PC-3 (cell line): ENCODE measurements at regions of chr2 and their contacts with region 1.

Region 1: GRCh38 chr2:230824406-230824978 is 40.2 kb upstream of the ITM2C start:
- DNase-seq: peak; percentile 82
- ATAC-seq: peak; percentile 80
- H3K4me3 ChIP-seq: peak overlapping the region; percentile 58
- H3K27ac ChIP-seq: no peak overlapping the region
- H3K4me1 ChIP-seq: no peaks in the 10 kb centered on the region
- H3K27me3 ChIP-seq: no peaks in the 10 kb centered on the region
- CTCF ChIP-seq: peak; percentile 83

Region 2: DNA sequence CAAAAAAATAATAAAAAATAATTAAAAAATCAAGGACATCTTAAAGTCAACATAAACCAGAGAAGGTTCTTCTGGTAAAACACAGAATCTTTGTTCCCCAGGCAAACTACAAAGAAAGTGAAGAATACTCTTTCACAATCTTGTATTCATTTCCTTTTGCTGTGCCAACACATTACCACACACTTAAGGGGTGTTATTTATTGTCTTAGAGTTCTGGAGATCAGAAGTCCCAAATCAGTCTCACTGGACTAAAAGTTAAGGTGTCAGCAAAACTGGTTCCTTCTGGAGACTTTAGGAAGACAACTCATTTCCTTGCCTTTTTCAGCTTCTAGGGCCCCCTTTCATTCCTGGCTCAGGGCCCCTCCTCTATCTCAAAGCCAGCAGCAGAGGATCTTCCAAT is 124.0 kb before region 1 on chr2:
- CTCF ChIA-PET with region 1: no interaction called
- POLR2A ChIA-PET with region 1: no interaction called
- intact Hi-C with region 1: no loop called
- DNase-seq: no peak
- ATAC-seq: no peak
- H3K4me3 ChIP-seq: no peak overlapping the region
- H3K27ac ChIP-seq: no peak overlapping the region
- H3K4me1 ChIP-seq: peaks cover 9% of the 10 kb centered on the region; the same call in 1 of the 2 replicates
- H3K27me3 ChIP-seq: no peaks in the 10 kb centered on the region
- CTCF ChIP-seq: no peak

Region 3: DNA sequence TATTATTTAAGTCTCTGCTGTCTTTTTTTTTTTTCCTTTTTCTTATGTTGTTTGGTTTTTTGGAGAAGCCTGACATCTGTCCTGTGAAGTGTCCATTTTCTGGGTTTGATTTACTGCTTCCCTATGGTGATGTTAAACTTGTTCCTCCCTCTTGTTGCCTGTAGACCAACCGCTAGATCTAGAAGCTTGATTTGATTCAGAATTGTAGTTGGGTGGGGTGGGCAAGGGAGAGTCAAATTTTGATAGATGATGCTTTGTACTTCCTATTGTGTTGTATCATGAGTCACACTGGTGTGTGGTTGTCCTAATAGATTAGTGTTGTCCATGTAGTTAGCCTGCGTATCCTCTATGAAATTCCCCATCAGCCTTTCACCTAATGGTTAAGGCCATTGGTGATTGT is 76.4 kb before region 1 on chr2:
- CTCF ChIA-PET with region 1: no interaction called
- POLR2A ChIA-PET with region 1: no interaction called
- intact Hi-C with region 1: no loop called
- DNase-seq: peak; percentile 55
- ATAC-seq: peak; percentile 32
- H3K4me3 ChIP-seq: no peak overlapping the region
- H3K27ac ChIP-seq: peak overlapping the region; percentile 31
- H3K4me1 ChIP-seq: peaks cover 31% of the 10 kb centered on the region
- H3K27me3 ChIP-seq: no peaks in the 10 kb centered on the region
- CTCF ChIP-seq: no peak

Region 4: GRCh38 chr2:230762317-230762896 is 62.1 kb before region 1 on chr2:
- CTCF ChIA-PET with region 1: no interaction called
- POLR2A ChIA-PET with region 1: no interaction called
- intact Hi-C with region 1: no loop called
- DNase-seq: peak; percentile 62
- ATAC-seq: peak; percentile 91
- H3K4me3 ChIP-seq: no peak overlapping the region
- H3K27ac ChIP-seq: no peak overlapping the region
- H3K4me1 ChIP-seq: peaks cover 18% of the 10 kb centered on the region
- H3K27me3 ChIP-seq: no peaks in the 10 kb centered on the region
- CTCF ChIP-seq: peak; percentile 79

Region 5: GRCh38 chr2:230902180-230902899 is 77.8 kb after region 1 on chr2:
- CTCF ChIA-PET with region 1: interaction called, 5 read pairs
- POLR2A ChIA-PET with region 1: no interaction called
- intact Hi-C with region 1: loop called (anchors 5 kb)
- DNase-seq: peak; percentile 72
- ATAC-seq: peak; percentile 85
- H3K4me3 ChIP-seq: no peak overlapping the region
- H3K27ac ChIP-seq: no peak overlapping the region
- H3K4me1 ChIP-seq: peaks cover 4% of the 10 kb centered on the region; the same call in 1 of the 2 replicates
- H3K27me3 ChIP-seq: no peaks in the 10 kb centered on the region
- CTCF ChIP-seq: peak; percentile 86

Region 6: GRCh38 chr2:230987137-230988020 is 162.9 kb after region 1 on chr2:
- CTCF ChIA-PET with region 1: interaction called, 19 read pairs
- POLR2A ChIA-PET with region 1: interaction called, 4 read pairs
- intact Hi-C with region 1: loop called (anchors 1 kb)
- DNase-seq: peak; percentile 78
- ATAC-seq: peak; percentile 98
- H3K4me3 ChIP-seq: peak overlapping the region; percentile 72
- H3K27ac ChIP-seq: no peak overlapping the region
- H3K4me1 ChIP-seq: peaks cover 5% of the 10 kb centered on the region
- H3K27me3 ChIP-seq: no peaks in the 10 kb centered on the region
- CTCF ChIP-seq: peak; percentile 92

Region 7: GRCh38 chr2:231056453-231057424 is 232.2 kb after region 1 on chr2 and contains the start of gene PSMD1:
- CTCF ChIA-PET with region 1: interaction called, 5 read pairs
- POLR2A ChIA-PET with region 1: no interaction called
- intact Hi-C with region 1: loop called (anchors 5 kb)
- DNase-seq: peak; percentile 91
- ATAC-seq: peak; percentile 70
- H3K4me3 ChIP-seq: peak within 1 kb of the TSS; percentile 100
- H3K27ac ChIP-seq: peak within 1 kb of the TSS; percentile 80
- H3K4me1 ChIP-seq: peaks cover 26% of the 10 kb centered on the region
- H3K27me3 ChIP-seq: no peaks in the 10 kb centered on the region
- CTCF ChIP-seq: peak; percentile 89
- total RNA-seq, gene PSMD1: 154 and 208 TPM in 2 replicates

Region 8: GRCh38 chr2:231270221-231271114 is 446.0 kb after region 1 on chr2:
- CTCF ChIA-PET with region 1: no interaction called
- POLR2A ChIA-PET with region 1: no interaction called
- intact Hi-C with region 1: no loop called
- DNase-seq: no peak
- ATAC-seq: no peak
- H3K4me3 ChIP-seq: no peak overlapping the region
- H3K27ac ChIP-seq: no peak overlapping the region
- H3K4me1 ChIP-seq: no peaks in the 10 kb centered on the region
- H3K27me3 ChIP-seq: no peaks in the 10 kb centered on the region
- CTCF ChIP-seq: no peak

Region 9: DNA sequence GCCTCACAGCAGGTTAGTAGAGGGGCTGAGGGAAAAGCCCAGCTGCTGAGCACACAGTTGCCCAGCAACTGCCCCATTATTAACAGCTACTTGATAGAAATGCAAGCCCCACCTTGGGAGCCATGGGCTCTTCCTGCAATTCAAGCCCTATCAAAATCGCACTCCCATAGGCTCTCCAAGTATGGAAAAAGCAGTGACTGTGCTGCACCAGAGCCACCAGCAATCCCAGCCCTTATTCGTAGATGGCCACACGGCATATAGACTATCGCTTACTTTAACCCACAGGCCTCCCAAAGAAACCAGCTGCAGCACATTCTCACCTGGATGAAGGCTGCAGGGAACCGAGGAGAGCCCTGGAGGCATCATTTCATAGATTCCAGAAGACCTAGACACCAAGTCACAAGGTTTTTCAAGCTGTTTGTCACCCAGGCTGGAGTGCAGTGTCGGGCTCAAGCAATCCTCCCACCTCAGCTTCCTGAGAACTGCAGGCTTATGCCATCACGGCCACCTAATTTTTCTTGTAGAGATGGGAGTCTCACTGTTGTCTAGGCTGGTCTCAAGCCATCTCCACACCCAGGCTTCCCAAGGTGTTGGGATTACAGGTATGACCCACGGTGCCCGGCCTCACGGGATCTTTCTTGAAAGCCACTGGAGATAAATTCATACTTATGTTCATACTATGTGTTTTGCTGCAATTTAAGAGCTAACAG is 628.5 kb after region 1 on chr2:
- CTCF ChIA-PET with region 1: no interaction called
- POLR2A ChIA-PET with region 1: no interaction called
- intact Hi-C with region 1: loop called (anchors 5 kb)
- DNase-seq: peak; percentile 23
- ATAC-seq: peak; percentile 42
- H3K4me3 ChIP-seq: no peak overlapping the region
- H3K27ac ChIP-seq: no peak overlapping the region
- H3K4me1 ChIP-seq: no peaks in the 10 kb centered on the region
- H3K27me3 ChIP-seq: no peaks in the 10 kb centered on the region
- CTCF ChIP-seq: no peak